CD4-positive, alpha-beta T cell (primary cell): ENCODE measurements at regions of chr3 and their contacts with region 1.

Region 1: DNA sequence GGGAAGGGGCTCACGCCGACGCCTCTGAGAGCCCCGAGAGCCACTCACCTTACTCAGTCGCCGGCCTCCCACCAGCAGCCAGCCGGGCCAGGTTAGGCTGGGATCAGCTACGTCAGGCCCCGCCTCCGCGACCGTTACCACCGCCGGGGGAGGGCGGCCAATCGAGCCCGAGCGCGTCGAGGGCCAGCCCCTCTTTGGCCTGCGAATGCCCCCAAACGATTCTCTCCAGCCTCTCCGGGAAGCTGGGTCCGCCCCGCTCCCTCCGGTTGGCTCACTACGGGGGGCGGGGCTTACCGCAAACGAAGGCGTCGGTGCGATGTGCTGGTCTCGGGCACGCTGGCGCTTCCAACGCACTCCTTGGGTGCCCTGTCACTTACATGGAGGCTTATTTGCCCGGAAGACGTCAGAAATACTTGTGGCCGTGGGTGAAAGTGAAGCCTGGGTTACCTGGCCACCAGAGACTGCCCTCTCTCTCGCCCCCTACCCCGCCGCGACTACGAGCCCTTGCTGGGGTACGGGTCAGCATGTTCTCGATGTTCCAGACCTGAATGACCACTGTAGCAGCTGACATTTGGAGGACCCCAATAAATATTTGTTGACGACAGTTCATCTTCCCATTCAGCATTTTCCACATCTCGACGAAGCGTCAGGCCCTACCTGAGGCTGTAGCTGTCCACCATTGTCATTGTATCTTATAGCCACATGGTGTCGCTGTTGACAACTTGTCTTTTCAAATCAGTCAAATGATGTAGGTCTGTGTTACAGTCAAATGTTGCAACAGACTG is at the start of gene CEP70:
- DNase-seq: peak; percentile 75 to 96 (median 86)
- ATAC-seq: peak; percentile 90
- H3K4me3 ChIP-seq: peak within 1 kb of the TSS; percentile 89
- H3K4me3 Mint-ChIP-seq: peak within 1 kb of the TSS; percentile 94
- H3K27ac ChIP-seq: peak within 1 kb of the TSS; percentile 84 to 94
- H3K27ac Mint-ChIP-seq: peak within 1 kb of the TSS; percentile 96
- H3K4me1 ChIP-seq: peaks cover 21% of the 10 kb centered on the region
- H3K4me1 Mint-ChIP-seq: peaks cover 13% of the 10 kb centered on the region
- H3K27me3 ChIP-seq: no peaks in the 10 kb centered on the region
- H3K27me3 Mint-ChIP-seq: no peaks in the 10 kb centered on the region
- CTCF ChIP-seq: peak; percentile 89
- total RNA-seq, gene CEP70: 21.5 to 23.0 TPM

Region 2: GRCh38 chr3:138180375-138181029 is 413.8 kb before region 1 on chr3:
- CTCF ChIA-PET with region 1: no interaction called
- POLR2A ChIA-PET with region 1: no interaction called
- intact Hi-C with region 1: loop called (anchors 5 kb)
- DNase-seq: peak in 10 of 14 experiments; percentile 4 to 67 (median 29)
- ATAC-seq: peak; percentile 88
- H3K4me3 ChIP-seq: no peak overlapping the region
- H3K4me3 Mint-ChIP-seq: no peak overlapping the region
- H3K27ac ChIP-seq: no peak overlapping the region
- H3K27ac Mint-ChIP-seq: no peak overlapping the region
- H3K4me1 ChIP-seq: no peaks in the 10 kb centered on the region
- H3K4me1 Mint-ChIP-seq: no peaks in the 10 kb centered on the region
- H3K27me3 ChIP-seq: peaks cover 0 to 8% of the 10 kb centered on the region in 2 experiments
- H3K27me3 Mint-ChIP-seq: peaks cover 4% of the 10 kb centered on the region
- CTCF ChIP-seq: peak; percentile 70

Region 3: GRCh38 chr3:138329127-138329983 is 265.0 kb before region 1 on chr3 and contains the start of gene NME9:
- CTCF ChIA-PET with region 1: interaction called, 4 read pairs
- POLR2A ChIA-PET with region 1: interaction called, 3 read pairs
- intact Hi-C with region 1: loop called (anchors 5 to 10 kb)
- DNase-seq: peak; percentile 80 to 97 (median 90)
- ATAC-seq: peak; percentile 85
- H3K4me3 ChIP-seq: peak within 1 kb of the TSS; percentile 69
- H3K4me3 Mint-ChIP-seq: peak within 1 kb of the TSS; percentile 98
- H3K27ac ChIP-seq: peak within 1 kb of the TSS; percentile 49 to 81
- H3K27ac Mint-ChIP-seq: peak within 1 kb of the TSS; percentile 88
- H3K4me1 ChIP-seq: peaks cover 20% of the 10 kb centered on the region
- H3K4me1 Mint-ChIP-seq: peaks cover 37% of the 10 kb centered on the region
- H3K27me3 ChIP-seq: no peaks in the 10 kb centered on the region
- H3K27me3 Mint-ChIP-seq: no peaks in the 10 kb centered on the region
- CTCF ChIP-seq: peak; percentile 71
- total RNA-seq, gene NME9: 0.80 TPM in 1 of 2 experiments, not detected in the other

Region 4: GRCh38 chr3:138547342-138547975 is 46.9 kb before region 1 on chr3:
- CTCF ChIA-PET with region 1: no interaction called
- POLR2A ChIA-PET with region 1: no interaction called
- intact Hi-C with region 1: no loop called
- DNase-seq: no peak
- ATAC-seq: no peak
- H3K4me3 ChIP-seq: no peak overlapping the region
- H3K4me3 Mint-ChIP-seq: no peak overlapping the region
- H3K27ac ChIP-seq: no peak overlapping the region
- H3K27ac Mint-ChIP-seq: no peak overlapping the region
- H3K4me1 ChIP-seq: no peaks in the 10 kb centered on the region
- H3K4me1 Mint-ChIP-seq: no peaks in the 10 kb centered on the region
- H3K27me3 ChIP-seq: no peaks in the 10 kb centered on the region
- H3K27me3 Mint-ChIP-seq: no peaks in the 10 kb centered on the region
- CTCF ChIP-seq: no peak

Region 5: GRCh38 chr3:138608322-138609135 is 14.2 kb after region 1 on chr3 and contains the start of gene FAIM:
- CTCF ChIA-PET with region 1: interaction called, 7 read pairs
- POLR2A ChIA-PET with region 1: interaction called, 75 read pairs
- intact Hi-C with region 1: loop called (anchors 2 kb)
- DNase-seq: peak; percentile 43 to 81 (median 60)
- ATAC-seq: peak; percentile 70
- H3K4me3 ChIP-seq: peak within 1 kb of the TSS; percentile 70
- H3K4me3 Mint-ChIP-seq: peak within 1 kb of the TSS; percentile 94
- H3K27ac ChIP-seq: peak within 1 kb of the TSS; percentile 56 to 75
- H3K27ac Mint-ChIP-seq: peak within 1 kb of the TSS; percentile 98
- H3K4me1 ChIP-seq: peaks cover 15% of the 10 kb centered on the region
- H3K4me1 Mint-ChIP-seq: peaks cover 22% of the 10 kb centered on the region
- H3K27me3 ChIP-seq: no peaks in the 10 kb centered on the region
- H3K27me3 Mint-ChIP-seq: peaks cover 6% of the 10 kb centered on the region
- CTCF ChIP-seq: no peak
- total RNA-seq, gene FAIM: 1.5 to 1.6 TPM

Region 6: GRCh38 chr3:138834359-138835212 is 240.2 kb after region 1 on chr3 and contains the start of gene PIK3CB:
- CTCF ChIA-PET with region 1: no interaction called
- POLR2A ChIA-PET with region 1: interaction called, 16 read pairs
- intact Hi-C with region 1: loop called (anchors 1 to 2 kb)
- DNase-seq: peak; percentile 78 to 94 (median 88)
- ATAC-seq: peak; percentile 86
- H3K4me3 ChIP-seq: peak within 1 kb of the TSS; percentile 92
- H3K4me3 Mint-ChIP-seq: peak within 1 kb of the TSS; percentile 94
- H3K27ac ChIP-seq: peak within 1 kb of the TSS; percentile 68 to 81
- H3K27ac Mint-ChIP-seq: peak within 1 kb of the TSS; percentile 96
- H3K4me1 ChIP-seq: peaks cover 36% of the 10 kb centered on the region
- H3K4me1 Mint-ChIP-seq: peaks cover 31% of the 10 kb centered on the region
- H3K27me3 ChIP-seq: no peaks in the 10 kb centered on the region
- H3K27me3 Mint-ChIP-seq: no peaks in the 10 kb centered on the region
- CTCF ChIP-seq: peak; percentile 39
- total RNA-seq, gene PIK3CB: 23.0 to 26.4 TPM

Region 7: DNA sequence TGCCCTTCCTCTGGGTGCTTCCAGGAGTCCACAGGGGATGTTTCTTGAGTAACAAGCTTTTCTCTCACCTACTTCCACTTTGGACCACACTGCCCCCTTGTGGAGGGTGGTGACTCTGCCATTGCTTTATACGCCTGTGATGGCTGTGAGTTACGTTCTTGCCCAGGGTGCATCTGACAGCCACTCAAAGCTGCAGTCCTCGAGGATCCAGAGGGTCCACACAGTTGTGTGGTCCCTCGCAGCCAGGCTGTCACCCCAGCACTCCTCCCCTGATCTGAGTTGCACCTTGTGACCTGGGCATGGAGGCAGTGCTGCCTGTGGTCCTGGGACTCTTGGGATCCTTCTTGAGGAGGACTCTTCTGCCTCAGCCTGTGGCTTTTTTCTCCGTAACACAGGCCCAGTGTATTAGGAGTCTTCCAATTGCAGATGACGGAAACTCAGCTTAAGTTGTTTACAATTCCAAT is 329.2 kb after region 1 on chr3:
- CTCF ChIA-PET with region 1: interaction called, 11 read pairs
- POLR2A ChIA-PET with region 1: interaction called, 5 read pairs
- intact Hi-C with region 1: no loop called
- DNase-seq: peak; percentile 72 to 90 (median 82)
- ATAC-seq: peak; percentile 95
- H3K4me3 ChIP-seq: no peak overlapping the region
- H3K4me3 Mint-ChIP-seq: peak overlapping the region; percentile 0
- H3K27ac ChIP-seq: no peak overlapping the region
- H3K27ac Mint-ChIP-seq: no peak overlapping the region
- H3K4me1 ChIP-seq: peaks cover 5% of the 10 kb centered on the region
- H3K4me1 Mint-ChIP-seq: no peaks in the 10 kb centered on the region
- H3K27me3 ChIP-seq: no peaks in the 10 kb centered on the region
- H3K27me3 Mint-ChIP-seq: peaks cover 22% of the 10 kb centered on the region
- CTCF ChIP-seq: peak; percentile 94

Region 8: DNA sequence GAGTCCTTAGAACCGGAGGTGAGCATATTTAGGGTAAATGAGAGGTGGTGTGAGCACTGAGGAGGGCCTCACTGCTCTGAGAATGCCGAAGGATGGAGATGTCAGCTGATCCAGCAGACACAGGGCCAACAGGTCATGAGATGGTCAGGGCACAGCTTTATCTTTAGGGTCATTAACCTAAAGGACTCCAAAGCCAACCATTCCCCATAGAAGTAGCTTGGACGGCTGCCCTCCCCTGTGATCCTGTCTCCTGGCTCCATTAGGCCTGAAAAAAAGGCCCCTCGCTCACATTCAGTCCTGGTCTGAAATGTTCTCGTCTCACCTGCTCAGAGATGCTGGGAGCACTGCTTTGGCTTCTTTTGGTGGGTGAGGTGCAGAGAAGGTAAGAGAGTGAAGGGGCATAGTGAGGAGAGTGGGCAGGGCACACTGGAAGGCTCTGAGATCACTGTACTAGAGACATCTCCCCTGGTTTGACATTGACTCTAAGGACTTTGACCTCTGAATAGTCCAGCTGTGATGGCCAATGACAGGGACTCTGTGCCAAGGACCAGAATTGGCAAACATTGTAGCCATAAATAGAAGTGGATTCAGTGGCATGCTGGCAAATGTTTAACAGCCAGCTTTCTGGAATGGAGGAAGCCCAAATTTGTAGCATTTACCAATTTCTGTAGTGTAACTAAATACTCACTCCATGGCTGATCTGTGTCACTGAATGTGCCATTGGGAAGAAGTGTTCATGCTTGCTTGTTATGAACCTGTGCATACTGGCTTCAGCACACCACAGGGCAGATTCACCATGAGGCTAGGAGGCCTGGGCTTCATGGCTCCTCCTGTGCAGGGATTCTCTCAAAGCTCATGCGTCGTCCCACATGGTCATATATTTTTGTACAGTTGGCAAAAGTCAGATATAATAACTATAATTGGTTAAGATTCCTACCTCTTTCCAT is 673.2 kb after region 1 on chr3:
- CTCF ChIA-PET with region 1: no interaction called
- POLR2A ChIA-PET with region 1: no interaction called
- intact Hi-C with region 1: no loop called
- DNase-seq: no peak
- ATAC-seq: no peak
- H3K4me3 ChIP-seq: no peak overlapping the region
- H3K4me3 Mint-ChIP-seq: no peak overlapping the region
- H3K27ac ChIP-seq: no peak overlapping the region
- H3K27ac Mint-ChIP-seq: no peak overlapping the region
- H3K4me1 ChIP-seq: no peaks in the 10 kb centered on the region
- H3K4me1 Mint-ChIP-seq: no peaks in the 10 kb centered on the region
- H3K27me3 ChIP-seq: peaks cover 5 to 8% of the 10 kb centered on the region in 2 experiments
- H3K27me3 Mint-ChIP-seq: peaks cover 5% of the 10 kb centered on the region
- CTCF ChIP-seq: no peak